ENCODE measurements at regions of chr14 and their contacts with region 1.

Region 1: DNA sequence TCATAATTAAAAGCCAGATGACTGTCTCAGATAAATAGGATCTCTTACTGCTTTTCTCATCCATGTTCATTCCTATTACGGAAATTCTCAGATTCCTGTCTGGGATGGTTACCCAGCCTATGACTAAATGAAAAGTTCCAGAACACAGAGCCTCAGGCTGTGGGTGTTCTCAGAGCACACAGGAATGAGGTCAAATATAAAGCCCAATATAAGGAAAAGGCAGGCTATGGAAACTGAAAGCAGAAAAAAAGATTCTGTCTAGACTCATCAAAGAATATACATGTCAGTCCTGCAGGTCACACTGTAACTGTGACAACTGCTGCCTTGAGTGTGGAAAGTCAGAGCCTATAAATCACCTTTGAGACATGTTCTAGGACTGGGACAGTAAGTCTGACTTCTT is 64.3 kb downstream of the DCAF5 start:
- DNase-seq: no peak
- ATAC-seq: peak; percentile 5
- H3K4me3 ChIP-seq: no peak overlapping the region
- H3K27ac ChIP-seq: peak overlapping the region in 1 of 2 donors; percentile 56
- H3K4me1 ChIP-seq: peaks cover 0 to 30% of the 10 kb centered on the region in 2 donors
- H3K27me3 ChIP-seq: no peaks in the 10 kb centered on the region
- CTCF ChIP-seq: no peak

Region 2: GRCh38 chr14:68911594-68912227 is 176.9 kb before region 1 on chr14:
- intact Hi-C with region 1: loop called in 1 of 2 experiments (anchors 10 kb)
- DNase-seq: peak in 3 of 4 donors; percentile 64 to 84 (median 66)
- ATAC-seq: peak; percentile 95
- H3K4me3 ChIP-seq: no peak overlapping the region
- H3K27ac ChIP-seq: peak overlapping the region in 1 of 2 donors; percentile 20
- H3K4me1 ChIP-seq: peaks cover 0 to 24% of the 10 kb centered on the region in 2 donors
- H3K27me3 ChIP-seq: no peaks in the 10 kb centered on the region
- CTCF ChIP-seq: peak; percentile 96 to 98

Region 3: GRCh38 chr14:69363055-69363454 is 274.5 kb after region 1 on chr14:
- intact Hi-C with region 1: no loop called
- DNase-seq: peak in 1 of 4 donors; percentile 5
- ATAC-seq: peak; percentile 31
- H3K4me3 ChIP-seq: no peak overlapping the region
- H3K27ac ChIP-seq: no peak overlapping the region
- H3K4me1 ChIP-seq: no peaks in the 10 kb centered on the region
- H3K27me3 ChIP-seq: no peaks in the 10 kb centered on the region
- CTCF ChIP-seq: no peak